Mammary epithelial cell (primary cell): ENCODE measurements at regions of chr2 and their contacts with region 1.

Region 1: DNA sequence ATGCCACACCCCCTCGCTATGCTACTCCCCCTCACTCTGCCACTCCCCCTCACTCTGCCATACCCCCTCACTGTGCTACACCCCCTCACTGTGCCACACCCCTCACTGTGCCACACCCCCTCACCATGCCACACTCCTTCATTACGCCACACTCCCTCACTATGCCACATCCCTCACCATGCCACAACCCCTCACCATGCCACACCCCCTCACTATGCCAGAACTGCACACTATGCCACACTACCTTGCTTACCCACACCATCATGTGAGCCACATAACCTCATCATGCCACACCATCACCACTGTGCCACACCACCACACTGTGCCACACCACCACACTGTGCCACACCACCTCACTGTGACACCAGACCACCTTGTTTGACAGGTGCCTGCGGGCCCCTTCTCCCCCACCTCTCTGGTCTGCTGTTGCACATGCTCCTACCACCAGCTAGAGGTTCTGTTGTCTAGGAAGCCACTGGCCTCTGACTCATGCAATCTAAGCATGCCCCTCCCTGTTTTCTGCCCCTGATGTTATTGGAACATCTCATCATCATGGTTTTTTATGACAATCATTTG is 22.0 kb downstream of the MARCHF4 start:
- DNase-seq: peak; percentile 75
- H3K4me3 ChIP-seq: no peak overlapping the region
- H3K27ac ChIP-seq: no peak overlapping the region
- H3K4me1 ChIP-seq: peaks cover 22% of the 10 kb centered on the region
- H3K27me3 ChIP-seq: peaks cover 2% of the 10 kb centered on the region
- CTCF ChIP-seq: no peak

Region 2: DNA sequence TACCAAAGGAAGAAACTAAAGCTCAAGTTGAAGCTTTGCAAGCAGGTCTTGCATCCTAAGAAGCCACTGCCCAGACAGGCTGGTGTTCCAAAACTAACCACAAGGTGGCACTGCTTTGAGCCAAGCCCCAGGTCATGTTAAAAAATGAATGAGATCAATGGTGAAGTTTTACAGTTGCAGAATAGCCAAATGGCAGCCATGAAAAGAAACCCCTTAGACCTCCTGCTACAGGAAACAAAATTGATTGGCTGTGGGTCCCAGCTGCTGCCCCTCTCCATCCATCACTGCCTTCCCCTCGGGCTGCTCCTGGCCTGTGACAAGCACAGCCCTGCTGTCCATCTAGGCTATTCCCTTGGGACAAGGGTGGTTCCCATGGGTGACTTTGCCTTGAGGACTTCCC is 316.2 kb before region 1 on chr2:
- CTCF ChIA-PET with region 1: no interaction called
- dilution Hi-C with region 1: no loop called
- in situ Hi-C with region 1: no loop called
- intact Hi-C with region 1: no loop called
- DNase-seq: peak; percentile 46
- H3K4me3 ChIP-seq: no peak overlapping the region
- H3K27ac ChIP-seq: no peak overlapping the region
- H3K4me1 ChIP-seq: peaks cover 5% of the 10 kb centered on the region
- H3K27me3 ChIP-seq: no peaks in the 10 kb centered on the region
- CTCF ChIP-seq: peak; percentile 90 to 95

Region 3: GRCh38 chr2:216298723-216299495 is 51.4 kb before region 1 on chr2:
- CTCF ChIA-PET with region 1: no interaction called
- dilution Hi-C with region 1: no loop called
- in situ Hi-C with region 1: no loop called
- intact Hi-C with region 1: no loop called
- DNase-seq: peak; percentile 54
- H3K4me3 ChIP-seq: no peak overlapping the region
- H3K27ac ChIP-seq: no peak overlapping the region
- H3K4me1 ChIP-seq: peaks cover 18% of the 10 kb centered on the region
- H3K27me3 ChIP-seq: no peaks in the 10 kb centered on the region
- CTCF ChIP-seq: no peak

Region 4: GRCh38 chr2:216315789-216316603 is 34.3 kb before region 1 on chr2:
- CTCF ChIA-PET with region 1: no interaction called
- dilution Hi-C with region 1: no loop called
- in situ Hi-C with region 1: no loop called
- intact Hi-C with region 1: no loop called
- DNase-seq: peak; percentile 71
- H3K4me3 ChIP-seq: no peak overlapping the region
- H3K27ac ChIP-seq: no peak overlapping the region
- H3K4me1 ChIP-seq: peaks cover 7% of the 10 kb centered on the region
- H3K27me3 ChIP-seq: peaks cover 1% of the 10 kb centered on the region
- CTCF ChIP-seq: no peak

Region 5: DNA sequence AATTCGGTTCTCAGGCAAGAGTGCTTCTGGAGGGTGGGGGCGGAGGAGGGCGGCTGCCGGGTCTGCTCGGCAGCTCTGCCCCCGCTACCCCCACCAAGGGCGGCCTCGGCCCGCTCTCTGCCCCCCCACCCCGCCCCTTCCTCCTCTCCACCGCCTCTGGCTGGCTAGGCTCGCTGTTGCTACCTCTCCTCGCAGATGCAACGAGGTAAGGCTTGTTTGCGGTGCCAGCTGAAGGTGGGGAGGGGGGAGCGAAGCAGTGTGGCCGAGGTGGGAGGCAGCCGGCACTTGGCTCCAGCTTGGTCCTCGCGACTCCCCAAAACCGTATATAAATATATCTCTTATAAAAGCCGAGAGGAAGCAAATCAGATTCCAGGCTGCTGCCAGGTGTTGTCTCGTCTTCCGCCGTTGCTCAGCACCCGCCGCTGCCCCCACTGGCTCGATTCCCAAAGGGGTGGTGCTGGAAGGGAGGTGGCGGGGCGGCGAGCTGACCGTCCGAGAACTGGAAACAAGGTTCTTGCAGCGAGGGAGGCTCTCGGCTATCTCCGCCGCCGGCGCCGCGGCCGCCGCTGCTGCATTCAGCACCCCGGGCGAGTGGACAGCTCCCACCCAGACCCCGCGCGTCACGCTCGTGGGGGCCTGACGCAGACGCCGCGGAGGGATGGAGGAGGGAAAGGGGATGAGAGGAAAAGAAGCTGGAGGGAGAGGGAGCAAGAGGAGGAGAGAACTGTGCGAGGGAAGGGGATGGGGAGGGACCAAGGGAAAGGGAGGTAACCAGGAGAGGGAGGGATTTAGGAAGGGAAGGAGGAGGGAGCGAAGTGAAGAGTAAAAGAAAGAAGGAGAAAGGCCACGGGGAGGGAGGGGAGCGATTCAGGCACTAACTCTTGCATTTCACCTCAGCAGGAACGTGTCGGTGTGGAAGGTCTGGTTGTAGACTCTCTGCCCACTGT is 21.7 kb after region 1 on chr2 and contains the start of gene MARCHF4:
- CTCF ChIA-PET with region 1: no interaction called
- dilution Hi-C with region 1: no loop called
- in situ Hi-C with region 1: no loop called
- intact Hi-C with region 1: loop called (anchors 1 kb)
- DNase-seq: peak; percentile 89
- H3K4me3 ChIP-seq: peak within 1 kb of the TSS; percentile 44 to 53 (median 47)
- H3K27ac ChIP-seq: no peak within 1 kb of the TSS
- H3K4me1 ChIP-seq: peaks cover 27% of the 10 kb centered on the region
- H3K27me3 ChIP-seq: peaks cover 12% of the 10 kb centered on the region
- CTCF ChIP-seq: no peak
- total RNA-seq, gene MARCHF4: under 0.01 to 4.6 TPM

Region 6: GRCh38 chr2:216388046-216388884 is 38.0 kb after region 1 on chr2:
- CTCF ChIA-PET with region 1: no interaction called
- dilution Hi-C with region 1: loop called (anchors 5 kb)
- in situ Hi-C with region 1: no loop called
- intact Hi-C with region 1: no loop called
- DNase-seq: no peak
- H3K4me3 ChIP-seq: no peak overlapping the region
- H3K27ac ChIP-seq: no peak overlapping the region
- H3K4me1 ChIP-seq: no peaks in the 10 kb centered on the region
- H3K27me3 ChIP-seq: peaks cover 1% of the 10 kb centered on the region
- CTCF ChIP-seq: no peak

Region 7: GRCh38 chr2:216424274-216424673 is 74.0 kb after region 1 on chr2:
- CTCF ChIA-PET with region 1: no interaction called
- dilution Hi-C with region 1: no loop called
- in situ Hi-C with region 1: no loop called
- intact Hi-C with region 1: no loop called
- DNase-seq: no peak
- H3K4me3 ChIP-seq: no peak overlapping the region
- H3K27ac ChIP-seq: no peak overlapping the region
- H3K4me1 ChIP-seq: peaks cover 9% of the 10 kb centered on the region
- H3K27me3 ChIP-seq: no peaks in the 10 kb centered on the region
- CTCF ChIP-seq: no peak